A549 (cell line): ENCODE measurements at regions of chr21 and their contacts with region 1.

Region 1: DNA sequence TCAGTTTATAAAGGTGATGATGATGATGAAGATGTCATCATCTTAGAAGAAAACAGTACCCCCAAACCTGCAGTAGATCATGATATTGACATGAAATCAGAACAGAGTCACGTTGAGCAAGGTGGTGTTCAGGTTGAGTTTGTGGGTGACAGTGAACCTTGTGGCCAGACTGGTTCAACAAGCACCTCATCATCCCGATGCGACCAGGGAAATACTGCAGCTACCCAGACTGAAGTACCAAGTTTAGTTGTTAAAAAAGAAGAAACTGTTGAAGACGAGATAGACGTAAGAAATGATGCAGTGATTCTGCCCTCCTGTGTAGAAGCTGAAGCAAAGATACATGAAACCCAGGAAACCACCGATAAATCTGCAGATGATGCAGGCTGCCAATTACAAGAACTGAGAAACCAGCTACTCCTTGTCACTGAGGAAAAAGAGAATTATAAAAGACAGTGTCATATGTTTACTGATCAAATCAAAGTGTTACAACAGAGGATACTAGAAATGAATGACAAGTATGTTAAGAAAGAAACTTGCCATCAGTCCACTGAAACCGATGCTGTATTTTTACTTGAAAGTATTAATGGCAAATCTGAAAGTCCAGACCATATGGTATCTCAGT is 16.0 kb upstream of the CHAF1B start:
- DNase-seq: no peak
- ATAC-seq: no peak
- H3K4me3 ChIP-seq: no peak overlapping the region
- H3K27ac ChIP-seq: no peak overlapping the region
- H3K4me1 ChIP-seq: no peaks in the 10 kb centered on the region
- CTCF ChIP-seq: no peak
- EP300 ChIP-seq: no peak
- POLR2A ChIP-seq: no peak
- RAD21 ChIP-seq: no peak

Region 2: DNA sequence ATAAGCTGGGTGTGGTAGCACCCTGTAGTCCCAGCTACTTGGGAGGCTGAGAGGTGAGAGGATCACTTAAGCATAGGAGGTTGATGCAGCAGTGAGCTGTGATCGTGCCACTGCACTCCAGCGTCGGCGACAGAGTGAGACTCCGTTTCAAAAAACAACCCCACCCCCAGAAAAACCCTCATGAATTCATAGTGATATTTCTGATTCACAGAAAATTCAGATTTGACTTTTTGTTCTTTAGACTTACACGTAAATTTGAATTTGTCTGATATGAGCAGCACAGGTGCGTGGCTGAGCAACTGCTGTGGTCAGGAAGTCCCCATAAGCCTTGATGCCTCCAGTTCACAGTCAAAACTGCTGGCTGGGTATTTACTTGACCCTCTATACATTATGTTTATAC is 59.2 kb before region 1 on chr21:
- CTCF ChIA-PET with region 1: no interaction called
- POLR2A ChIA-PET with region 1: no interaction called
- DNase-seq: no peak
- ATAC-seq: no peak
- H3K4me3 ChIP-seq: no peak overlapping the region
- H3K27ac ChIP-seq: no peak overlapping the region
- H3K4me1 ChIP-seq: no peaks in the 10 kb centered on the region
- CTCF ChIP-seq: no peak
- EP300 ChIP-seq: no peak
- POLR2A ChIP-seq: no peak
- RAD21 ChIP-seq: no peak

Region 3: GRCh38 chr21:36381841-36382589 is 12.8 kb after region 1 on chr21:
- CTCF ChIA-PET with region 1: interaction called, 3 read pairs
- POLR2A ChIA-PET with region 1: interaction called, 12 read pairs
- DNase-seq: no peak
- ATAC-seq: no peak
- H3K4me3 ChIP-seq: no peak overlapping the region
- H3K27ac ChIP-seq: peak overlapping the region; percentile 58 to 77; a peak in 5 of 6 replicates
- H3K4me1 ChIP-seq: peaks cover 12% of the 10 kb centered on the region; the same call in 2 of the 3 replicates
- CTCF ChIP-seq: no peak
- EP300 ChIP-seq: no peak
- POLR2A ChIP-seq: no peak
- RAD21 ChIP-seq: no peak

Region 4: GRCh38 chr21:38269576-38269936 is 1900.4 kb after region 1 on chr21:
- CTCF ChIA-PET with region 1: no interaction called
- POLR2A ChIA-PET with region 1: no interaction called
- DNase-seq: no peak
- ATAC-seq: no peak
- H3K4me3 ChIP-seq: no peak overlapping the region
- H3K27ac ChIP-seq: peak overlapping the region; percentile 48 to 66; a peak in 5 of 6 replicates
- H3K4me1 ChIP-seq: peaks cover 23% of the 10 kb centered on the region
- CTCF ChIP-seq: no peak
- EP300 ChIP-seq: no peak
- POLR2A ChIP-seq: no peak
- RAD21 ChIP-seq: no peak